AG04450 (cell line): ENCODE measurements at regions of chr13 and their contacts with region 1.

Region 1: DNA sequence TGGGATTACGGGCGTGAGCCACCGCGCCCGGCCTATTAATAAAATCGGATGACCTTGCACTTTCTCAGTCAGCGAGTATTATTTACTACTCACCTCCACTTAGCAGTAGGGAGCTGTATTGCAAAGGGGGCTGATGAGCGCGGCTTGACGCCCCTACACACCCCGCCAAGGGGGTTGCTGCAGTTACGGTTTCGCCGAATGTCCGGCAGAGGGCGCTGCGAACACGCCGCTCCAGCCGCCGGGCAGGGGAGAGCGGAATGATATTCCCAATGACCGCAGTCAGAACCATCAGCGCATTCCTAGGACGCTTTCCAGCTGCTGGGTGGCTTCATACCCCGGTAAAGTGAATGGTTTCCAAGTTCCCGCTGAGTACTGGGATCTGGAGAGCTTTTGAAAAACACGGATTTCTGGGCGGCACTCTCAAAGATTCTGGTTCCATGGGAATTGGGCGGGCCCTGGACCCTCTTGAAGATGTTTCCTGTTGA is 30.0 kb upstream of the TPT1 start:
- DNase-seq: peak; percentile 73
- H3K4me3 ChIP-seq: no peak overlapping the region
- H3K27ac ChIP-seq: peak overlapping the region; percentile 31
- H3K27me3 ChIP-seq: no peaks in the 10 kb centered on the region
- CTCF ChIP-seq: peak; percentile 95

Region 2: GRCh38 chr13:45356966-45357672 is 13.8 kb before region 1 on chr13:
- CTCF ChIA-PET with region 1: interaction called, 16 read pairs
- POLR2A ChIA-PET with region 1: no interaction called
- DNase-seq: no peak
- H3K4me3 ChIP-seq: no peak overlapping the region
- H3K27ac ChIP-seq: peak overlapping the region; percentile 39
- H3K27me3 ChIP-seq: no peaks in the 10 kb centered on the region
- CTCF ChIP-seq: no peak

Region 3: GRCh38 chr13:45385907-45386553 is 15.1 kb after region 1 on chr13:
- CTCF ChIA-PET with region 1: interaction called, 11 read pairs
- POLR2A ChIA-PET with region 1: no interaction called
- DNase-seq: no peak
- H3K4me3 ChIP-seq: no peak overlapping the region
- H3K27ac ChIP-seq: no peak overlapping the region
- H3K27me3 ChIP-seq: no peaks in the 10 kb centered on the region
- CTCF ChIP-seq: no peak

Region 4: GRCh38 chr13:45393941-45394570 is 23.1 kb after region 1 on chr13:
- CTCF ChIA-PET with region 1: interaction called, 46 read pairs
- POLR2A ChIA-PET with region 1: interaction called, 3 read pairs
- DNase-seq: no peak
- H3K4me3 ChIP-seq: no peak overlapping the region
- H3K27ac ChIP-seq: no peak overlapping the region
- H3K27me3 ChIP-seq: no peaks in the 10 kb centered on the region
- CTCF ChIP-seq: peak; percentile 80

Region 5: DNA sequence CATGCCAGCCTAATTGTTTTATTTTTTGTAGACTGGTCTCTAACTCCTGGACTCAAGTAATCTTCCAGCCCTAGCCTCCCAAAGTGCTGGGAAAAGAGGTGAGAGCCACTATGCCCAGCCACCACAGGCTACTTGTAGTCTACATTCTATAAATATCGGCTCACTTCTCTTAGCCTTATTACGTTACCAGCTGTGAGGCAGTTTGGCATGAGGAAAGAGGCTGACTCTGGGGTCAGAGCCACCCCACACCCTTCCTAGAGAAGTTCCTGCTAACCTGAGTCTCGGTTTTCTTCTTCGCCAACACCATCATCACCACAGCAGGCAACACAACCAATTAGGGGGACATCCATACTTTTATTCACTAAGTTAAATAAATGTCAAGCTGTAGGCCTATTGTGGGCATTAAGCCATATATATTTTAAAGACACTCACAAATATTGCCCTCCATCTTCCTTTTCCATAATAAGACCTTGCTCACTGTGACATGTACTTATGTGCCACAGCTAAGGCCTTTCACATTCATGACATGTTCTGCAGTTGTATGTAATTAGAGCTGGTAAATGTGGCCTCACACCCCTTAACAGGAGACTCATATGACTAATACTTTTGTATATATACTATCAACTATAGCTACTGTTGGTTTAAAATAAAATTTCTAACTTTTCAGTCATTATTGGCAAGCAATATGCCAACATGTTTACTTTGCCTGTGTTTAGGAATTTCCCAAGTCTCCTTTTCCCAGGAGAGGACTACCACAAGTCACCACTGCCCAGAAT is 41.5 kb after region 1 on chr13:
- CTCF ChIA-PET with region 1: interaction called, 14 read pairs
- POLR2A ChIA-PET with region 1: no interaction called
- DNase-seq: no peak
- H3K4me3 ChIP-seq: no peak overlapping the region
- H3K27ac ChIP-seq: no peak overlapping the region
- H3K27me3 ChIP-seq: no peaks in the 10 kb centered on the region
- CTCF ChIP-seq: no peak

Region 6: GRCh38 chr13:45950386-45951000 is 579.5 kb after region 1 on chr13:
- CTCF ChIA-PET with region 1: no interaction called
- POLR2A ChIA-PET with region 1: no interaction called
- DNase-seq: no peak
- H3K4me3 ChIP-seq: no peak overlapping the region
- H3K27ac ChIP-seq: no peak overlapping the region
- H3K27me3 ChIP-seq: no peaks in the 10 kb centered on the region
- CTCF ChIP-seq: no peak